ENCODE measurements at regions of chr1 and their contacts with region 1.

Region 1: GRCh38 chr1:174344162-174344561 is 103.6 kb upstream of the GPR52 start:
- DNase-seq: no peak
- ATAC-seq: peak; percentile 52
- H3K4me3 Mint-ChIP-seq: peak overlapping the region; percentile 4
- H3K27ac Mint-ChIP-seq: peak overlapping the region; percentile 8
- H3K4me1 Mint-ChIP-seq: peaks cover 32% of the 10 kb centered on the region
- H3K27me3 Mint-ChIP-seq: no peaks in the 10 kb centered on the region
- CTCF ChIP-seq: no peak

Region 2: DNA sequence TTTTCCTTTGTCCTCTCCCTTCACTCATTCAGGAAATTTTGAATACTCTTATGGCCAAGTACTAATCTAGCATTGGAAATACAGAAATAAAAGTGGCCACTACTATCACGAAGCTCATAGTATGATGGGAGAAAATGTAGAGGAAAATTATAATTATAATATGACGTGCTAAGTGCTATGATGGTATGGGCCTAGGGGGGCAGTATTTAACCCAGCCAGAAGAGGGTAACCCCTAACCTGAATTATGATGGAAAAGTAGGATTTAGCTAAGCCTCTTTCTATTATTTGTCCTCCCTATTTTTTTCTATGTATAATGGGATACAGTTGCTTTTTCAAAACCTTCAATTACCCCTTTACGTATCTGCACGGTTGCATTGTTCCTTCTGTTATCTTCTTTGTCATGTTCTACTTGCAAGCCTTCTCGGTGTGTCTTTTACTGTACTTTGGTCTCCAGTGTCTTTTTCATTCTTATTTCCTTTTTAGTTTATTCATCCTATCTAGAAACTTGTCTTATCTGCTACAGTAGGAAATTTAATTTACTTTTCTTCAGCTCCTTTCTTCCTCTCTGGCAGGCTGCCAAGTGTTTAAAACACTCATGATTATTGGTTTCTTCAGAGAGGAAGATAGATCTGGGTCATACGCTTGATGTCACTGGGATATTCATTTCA is 14.8 kb after region 1 on chr1:
- CTCF ChIA-PET with region 1: no interaction called
- POLR2A ChIA-PET with region 1: no interaction called
- intact Hi-C with region 1: loop called (anchors 2 kb)
- DNase-seq: no peak
- ATAC-seq: no peak
- H3K4me3 Mint-ChIP-seq: no peak overlapping the region
- H3K27ac Mint-ChIP-seq: no peak overlapping the region
- H3K4me1 Mint-ChIP-seq: peaks cover 29% of the 10 kb centered on the region
- H3K27me3 Mint-ChIP-seq: no peaks in the 10 kb centered on the region
- CTCF ChIP-seq: no peak

Region 3: GRCh38 chr1:174376030-174376429 is 31.9 kb after region 1 on chr1:
- CTCF ChIA-PET with region 1: no interaction called
- POLR2A ChIA-PET with region 1: no interaction called
- intact Hi-C with region 1: no loop called
- DNase-seq: no peak
- ATAC-seq: no peak
- H3K4me3 Mint-ChIP-seq: no peak overlapping the region
- H3K27ac Mint-ChIP-seq: no peak overlapping the region
- H3K4me1 Mint-ChIP-seq: peaks cover 6% of the 10 kb centered on the region
- H3K27me3 Mint-ChIP-seq: no peaks in the 10 kb centered on the region
- CTCF ChIP-seq: no peak

Region 4: GRCh38 chr1:175192630-175193526 is 848.7 kb after region 1 on chr1 and contains the start of gene KIAA0040:
- CTCF ChIA-PET with region 1: no interaction called
- POLR2A ChIA-PET with region 1: no interaction called
- intact Hi-C with region 1: no loop called
- DNase-seq: peak; percentile 54
- ATAC-seq: peak; percentile 53
- H3K4me3 Mint-ChIP-seq: peak within 1 kb of the TSS; percentile 99
- H3K27ac Mint-ChIP-seq: peak within 1 kb of the TSS; percentile 97
- H3K4me1 Mint-ChIP-seq: peaks cover 92% of the 10 kb centered on the region
- H3K27me3 Mint-ChIP-seq: no peaks in the 10 kb centered on the region
- CTCF ChIP-seq: no peak
- total RNA-seq, gene KIAA0040: 55.5 and 57.2 TPM in 2 replicates

Measured in activated B cell treated with CpG ODN at 0.5 μM for 24 hours (primary cell).